ENCODE measurements at regions of chr10 and their contacts with region 1.

Region 1: DNA sequence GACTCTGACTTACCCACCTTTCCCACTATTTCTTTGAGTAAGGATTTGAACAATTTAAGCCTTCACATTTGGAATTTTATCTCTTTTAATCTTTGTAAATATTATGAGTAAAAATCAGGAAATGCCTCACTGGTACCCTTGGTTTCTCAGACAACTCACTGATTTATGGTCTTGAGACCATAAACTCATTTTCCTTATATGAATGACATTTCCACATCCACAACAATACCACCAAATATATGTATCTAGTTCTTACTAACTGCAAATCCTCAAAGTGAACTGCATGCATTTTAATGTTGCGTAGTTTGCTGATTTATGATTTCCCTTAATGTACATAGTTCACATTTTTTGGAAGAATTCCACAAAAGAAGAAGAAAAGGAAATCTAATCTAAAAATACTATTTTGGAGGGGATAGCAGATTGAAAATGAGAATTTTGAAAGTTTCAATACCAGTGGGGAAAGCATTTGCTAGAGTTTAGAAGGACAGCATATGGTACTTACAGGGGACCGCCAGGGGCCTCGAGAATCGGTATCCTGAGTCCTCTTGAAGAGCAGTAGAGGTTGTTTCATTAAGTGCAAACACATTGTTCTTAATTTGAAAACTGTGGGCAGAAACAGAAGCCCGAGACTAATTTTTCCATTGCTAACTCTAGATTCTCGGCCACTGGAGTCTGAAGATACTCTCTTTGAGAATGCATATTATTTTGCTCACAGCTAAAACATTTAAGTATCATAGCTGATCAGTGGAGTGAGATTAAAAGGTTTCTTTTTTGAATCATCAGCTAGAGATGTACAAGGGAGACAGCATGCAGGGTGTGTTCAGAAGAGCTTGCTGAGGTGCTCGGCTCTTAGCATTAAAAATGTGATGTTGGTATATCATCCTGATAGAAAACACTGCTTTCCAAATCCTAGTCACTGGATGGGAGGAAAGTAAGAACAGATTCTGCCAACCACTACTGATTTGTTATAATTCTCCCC is 964.0 kb downstream of the GATA3 start:
- DNase-seq: no peak
- H3K4me3 ChIP-seq: no peak overlapping the region
- H3K27ac ChIP-seq: no peak overlapping the region
- H3K4me1 ChIP-seq: no peaks in the 10 kb centered on the region
- H3K27me3 ChIP-seq: no peaks in the 10 kb centered on the region
- CTCF ChIP-seq: no peak

Region 2: DNA sequence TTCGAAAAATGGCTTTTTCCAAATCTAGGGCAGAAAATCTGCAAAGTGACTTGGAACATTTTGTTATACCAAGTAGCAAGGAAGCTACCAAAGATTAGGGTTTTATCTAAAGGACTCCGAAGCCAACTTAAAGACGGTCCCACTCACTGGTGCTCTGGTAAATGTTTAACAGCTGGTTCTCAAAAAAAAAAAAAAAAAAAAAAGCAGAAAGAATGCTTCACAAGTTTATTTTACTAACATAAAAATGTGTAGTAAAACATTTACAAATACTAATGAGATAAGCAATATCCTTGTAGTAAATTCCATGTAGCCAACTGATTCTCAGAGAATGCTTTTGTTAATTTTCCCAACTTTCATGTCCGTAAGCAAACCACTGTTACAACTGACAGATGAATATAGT is 1161.8 kb before region 1 on chr10:
- CTCF ChIA-PET with region 1: interaction called, 27 read pairs
- POLR2A ChIA-PET with region 1: no interaction called
- intact Hi-C with region 1: no loop called
- DNase-seq: no peak
- H3K4me3 ChIP-seq: no peak overlapping the region
- H3K27ac ChIP-seq: no peak overlapping the region
- H3K4me1 ChIP-seq: no peaks in the 10 kb centered on the region
- H3K27me3 ChIP-seq: no peaks in the 10 kb centered on the region
- CTCF ChIP-seq: no peak

Region 3: DNA sequence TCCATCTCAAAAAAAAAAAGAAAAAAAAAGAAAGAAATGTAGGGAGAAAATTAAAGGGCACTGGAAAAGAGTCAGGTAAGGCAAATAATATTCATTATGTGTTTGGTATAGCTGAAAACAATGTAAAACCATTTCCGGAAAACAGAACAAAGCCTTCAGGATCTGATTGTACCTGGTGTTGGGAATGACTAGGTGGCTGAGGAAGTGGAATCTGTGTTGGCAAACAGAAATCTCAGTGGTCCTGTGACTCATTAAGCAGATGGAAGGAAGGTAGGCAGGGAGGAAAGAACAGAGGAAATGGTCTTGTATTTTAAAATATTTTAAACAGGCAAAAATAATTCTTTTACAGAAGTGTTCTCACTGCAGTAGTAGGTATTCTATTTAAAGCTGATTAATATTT is 1019.7 kb before region 1 on chr10:
- CTCF ChIA-PET with region 1: no interaction called
- POLR2A ChIA-PET with region 1: no interaction called
- intact Hi-C with region 1: no loop called
- DNase-seq: no peak
- H3K4me3 ChIP-seq: no peak overlapping the region
- H3K27ac ChIP-seq: no peak overlapping the region
- H3K4me1 ChIP-seq: no peaks in the 10 kb centered on the region
- H3K27me3 ChIP-seq: no peaks in the 10 kb centered on the region
- CTCF ChIP-seq: no peak

Region 4: DNA sequence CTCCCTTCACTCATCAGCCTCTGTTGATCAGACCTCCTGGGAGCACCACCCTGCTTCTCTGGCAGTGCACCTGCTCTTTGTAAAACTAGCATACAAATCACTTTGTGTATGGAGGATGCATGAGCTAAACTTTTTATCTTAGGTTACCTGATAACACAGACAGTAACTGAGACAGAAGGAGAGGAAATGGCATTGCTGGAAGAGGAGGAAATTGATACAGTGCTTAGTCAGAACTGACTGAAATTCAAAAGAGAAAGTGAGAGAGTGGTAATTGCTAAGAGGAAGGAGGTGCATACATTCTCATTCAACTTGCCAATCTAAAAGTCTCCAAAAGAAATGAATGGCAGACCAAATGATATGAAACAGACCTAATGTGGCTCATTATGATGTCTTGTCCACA is 156.7 kb after region 1 on chr10:
- CTCF ChIA-PET with region 1: no interaction called
- POLR2A ChIA-PET with region 1: no interaction called
- intact Hi-C with region 1: no loop called
- DNase-seq: no peak
- H3K4me3 ChIP-seq: no peak overlapping the region
- H3K27ac ChIP-seq: no peak overlapping the region
- H3K4me1 ChIP-seq: no peaks in the 10 kb centered on the region
- H3K27me3 ChIP-seq: no peaks in the 10 kb centered on the region
- CTCF ChIP-seq: no peak

Region 5: GRCh38 chr10:9911488-9911887 is 893.0 kb after region 1 on chr10:
- CTCF ChIA-PET with region 1: no interaction called
- POLR2A ChIA-PET with region 1: no interaction called
- intact Hi-C with region 1: no loop called
- DNase-seq: no peak
- H3K4me3 ChIP-seq: no peak overlapping the region
- H3K27ac ChIP-seq: no peak overlapping the region
- H3K4me1 ChIP-seq: no peaks in the 10 kb centered on the region
- H3K27me3 ChIP-seq: no peaks in the 10 kb centered on the region
- CTCF ChIP-seq: no peak

Measured in PC-9 (cell line).